Endothelial cell of umbilical vein (primary cell): ENCODE measurements at regions of chr14 and their contacts with region 1.

Region 1: DNA sequence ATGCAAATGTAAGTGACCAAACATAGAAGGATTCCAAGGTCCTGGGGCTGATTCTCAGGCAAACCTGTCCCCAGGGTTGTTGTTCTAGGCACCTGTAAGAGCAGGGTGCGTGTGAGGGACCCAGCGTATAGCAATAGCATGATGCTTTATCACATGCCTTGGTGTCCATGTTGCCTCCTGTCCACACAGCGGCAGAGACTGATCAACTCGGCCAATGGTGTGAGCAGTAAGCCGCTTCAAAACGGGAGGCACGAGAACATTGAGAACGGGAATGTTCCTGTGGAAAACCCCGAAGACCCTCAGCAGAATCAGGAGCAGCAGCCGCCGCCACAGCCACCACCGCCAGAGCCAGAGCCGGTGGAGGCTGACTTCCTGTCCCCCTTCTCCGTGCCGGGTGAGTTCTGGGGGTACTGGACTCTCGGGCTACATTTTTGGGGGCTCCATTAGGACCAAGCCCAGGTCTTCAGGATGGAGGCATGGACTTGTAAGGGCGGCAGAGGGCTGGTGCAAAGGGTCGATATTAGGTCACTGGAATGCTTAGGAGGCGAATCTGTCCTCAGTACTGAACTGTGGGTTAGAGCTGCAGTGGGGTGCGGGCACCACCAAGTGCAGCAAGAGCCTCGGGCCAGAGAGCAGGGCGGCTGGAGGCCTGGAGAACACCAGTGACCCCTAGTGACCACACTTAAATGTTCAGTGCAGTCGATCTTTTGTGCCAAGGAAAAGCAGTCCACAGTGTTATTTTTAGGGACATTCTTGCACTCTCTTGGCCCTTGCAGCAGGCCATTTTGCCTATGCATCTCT is 57.2 kb upstream of the RIN3 start:
- DNase-seq: peak; percentile 66
- H3K4me3 ChIP-seq: no peak overlapping the region
- H3K27ac ChIP-seq: no peak overlapping the region
- H3K4me1 ChIP-seq: peaks cover 24% of the 10 kb centered on the region
- H3K27me3 ChIP-seq: no peaks in the 10 kb centered on the region
- CTCF ChIP-seq: peak; percentile 56 to 74
- POLR2A ChIP-seq: no peak

Region 2: DNA sequence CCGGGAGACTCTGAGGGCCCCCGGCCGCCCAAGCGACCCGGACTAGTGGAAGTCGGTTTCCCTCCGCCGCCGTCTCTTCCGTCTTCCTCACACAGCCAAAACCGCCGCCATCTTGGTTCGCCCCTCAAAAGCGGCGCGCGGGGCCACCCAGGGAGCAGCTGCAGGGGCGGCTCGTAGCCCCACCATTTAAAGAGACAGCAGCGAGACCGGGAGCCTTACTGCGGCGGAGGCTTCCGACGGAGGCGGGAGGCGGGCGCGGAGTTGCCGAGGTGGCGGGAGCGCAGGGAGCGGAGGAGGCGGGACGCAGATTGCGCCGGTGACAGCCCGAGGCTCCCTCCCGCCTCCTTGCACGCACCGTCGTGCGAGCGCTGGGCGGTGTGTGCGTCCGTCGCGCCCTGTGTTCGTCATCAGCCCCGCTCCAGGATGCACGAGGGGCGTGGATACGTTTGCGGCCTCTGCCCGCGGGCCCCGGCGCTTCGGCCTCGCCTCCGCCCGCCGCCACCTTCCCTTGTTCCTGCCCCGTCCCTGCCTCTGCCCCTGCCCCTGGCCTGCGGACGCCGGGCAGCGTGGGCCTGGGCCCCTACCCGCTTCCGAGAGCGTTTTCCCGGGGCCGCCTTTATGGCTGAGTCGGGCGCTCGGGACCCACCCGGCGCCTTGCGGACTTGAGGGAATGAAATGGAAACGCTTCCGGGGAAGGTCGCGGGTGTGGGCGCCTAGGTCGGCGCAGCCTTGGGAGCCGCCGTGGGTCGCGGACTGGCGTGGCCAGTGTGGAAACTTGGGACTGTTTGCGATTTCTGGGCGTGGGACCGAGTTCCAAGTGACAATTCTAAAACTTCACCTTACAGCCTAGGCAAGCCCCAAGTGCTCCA is 946.0 kb before region 1 on chr14 and contains the start of gene PPP4R3A:
- CTCF ChIA-PET with region 1: no interaction called
- POLR2A ChIA-PET with region 1: no interaction called
- dilution Hi-C with region 1: no loop called
- intact Hi-C with region 1: loop called (anchors 1 kb)
- DNase-seq: peak; percentile 96
- H3K4me3 ChIP-seq: peak within 1 kb of the TSS; percentile 56 to 97 (median 85)
- H3K27ac ChIP-seq: peak within 1 kb of the TSS; percentile 83
- H3K4me1 ChIP-seq: peaks cover 17% of the 10 kb centered on the region
- H3K27me3 ChIP-seq: no peaks in the 10 kb centered on the region
- CTCF ChIP-seq: no peak
- POLR2A ChIP-seq: peak; percentile 89
- total RNA-seq, gene PPP4R3A: 77.0 and 83.5 TPM in 2 replicates

Region 3: DNA sequence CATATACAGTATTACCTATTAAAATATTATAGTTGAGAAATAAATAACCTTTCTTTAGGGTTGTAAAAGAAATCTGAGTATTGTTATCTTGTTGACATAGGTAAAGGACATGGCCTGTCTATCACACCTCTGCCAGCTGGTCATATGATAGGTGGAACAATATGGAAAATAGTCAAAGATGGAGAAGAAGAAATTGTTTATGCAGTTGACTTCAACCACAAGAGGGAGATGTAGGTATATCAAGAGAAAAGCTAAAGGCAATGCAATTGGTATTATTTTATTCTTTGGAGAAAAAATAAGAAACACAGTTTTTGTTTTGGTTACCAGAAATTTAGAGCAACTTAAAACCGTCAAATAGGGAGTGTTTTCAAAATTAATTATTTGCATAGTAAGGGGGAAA is 321.1 kb before region 1 on chr14:
- CTCF ChIA-PET with region 1: interaction called, 8 read pairs
- POLR2A ChIA-PET with region 1: no interaction called
- dilution Hi-C with region 1: no loop called
- intact Hi-C with region 1: loop called (anchors 1 kb)
- DNase-seq: peak; percentile 49
- H3K4me3 ChIP-seq: no peak overlapping the region
- H3K27ac ChIP-seq: no peak overlapping the region
- H3K4me1 ChIP-seq: no peaks in the 10 kb centered on the region
- H3K27me3 ChIP-seq: no peaks in the 10 kb centered on the region
- CTCF ChIP-seq: peak; percentile 14 to 35
- POLR2A ChIP-seq: no peak

Region 4: DNA sequence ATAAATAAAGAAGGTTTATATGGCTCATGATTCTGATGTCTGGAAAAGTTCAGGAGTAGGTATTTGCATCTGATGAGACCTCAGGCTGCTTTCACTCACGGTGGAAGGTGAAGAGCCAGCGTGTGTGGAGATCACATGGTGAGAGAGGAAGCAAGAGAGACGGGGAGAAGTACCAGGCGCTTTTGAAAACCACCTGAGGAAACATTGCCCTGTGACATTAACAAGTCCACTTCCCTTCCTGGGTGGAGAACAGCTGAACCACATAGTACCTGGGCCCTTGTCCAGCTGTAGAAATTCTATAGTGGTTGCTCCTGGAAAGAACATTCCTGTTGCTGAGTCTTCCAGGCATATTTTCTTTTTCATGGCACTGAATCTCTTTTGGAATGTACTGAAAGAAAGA is 30.2 kb before region 1 on chr14:
- CTCF ChIA-PET with region 1: no interaction called
- POLR2A ChIA-PET with region 1: no interaction called
- dilution Hi-C with region 1: no loop called
- intact Hi-C with region 1: no loop called
- DNase-seq: no peak
- H3K4me3 ChIP-seq: no peak overlapping the region
- H3K27ac ChIP-seq: no peak overlapping the region
- H3K4me1 ChIP-seq: no peaks in the 10 kb centered on the region
- H3K27me3 ChIP-seq: no peaks in the 10 kb centered on the region
- CTCF ChIP-seq: no peak
- POLR2A ChIP-seq: no peak

Region 5: DNA sequence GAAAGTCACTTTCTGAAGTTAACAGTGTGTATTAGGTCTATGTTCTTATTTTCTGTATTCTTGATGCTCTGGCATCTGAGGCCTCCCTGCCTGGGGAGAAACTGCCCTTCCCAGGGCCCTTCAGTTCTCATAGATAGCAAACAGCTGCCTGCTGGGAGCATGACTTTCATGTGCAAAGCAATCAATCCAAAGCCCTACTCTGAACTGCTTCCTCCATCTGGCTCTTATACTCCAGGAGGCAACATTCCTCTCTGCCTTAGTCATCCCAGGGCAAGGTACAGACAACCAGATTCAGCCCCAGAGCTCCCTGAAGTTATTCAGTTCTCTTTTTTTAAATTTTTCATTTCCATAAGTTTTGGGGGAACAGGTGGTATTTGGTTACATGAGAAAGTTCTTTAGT is 15.5 kb after region 1 on chr14:
- CTCF ChIA-PET with region 1: interaction called, 10 read pairs
- POLR2A ChIA-PET with region 1: no interaction called
- dilution Hi-C with region 1: no loop called
- intact Hi-C with region 1: no loop called
- DNase-seq: peak; percentile 52
- H3K4me3 ChIP-seq: no peak overlapping the region
- H3K27ac ChIP-seq: no peak overlapping the region
- H3K4me1 ChIP-seq: no peaks in the 10 kb centered on the region
- H3K27me3 ChIP-seq: peaks cover 0 to 3% of the 10 kb centered on the region in 2 experiments
- CTCF ChIP-seq: no peak
- POLR2A ChIP-seq: no peak

Region 6: DNA sequence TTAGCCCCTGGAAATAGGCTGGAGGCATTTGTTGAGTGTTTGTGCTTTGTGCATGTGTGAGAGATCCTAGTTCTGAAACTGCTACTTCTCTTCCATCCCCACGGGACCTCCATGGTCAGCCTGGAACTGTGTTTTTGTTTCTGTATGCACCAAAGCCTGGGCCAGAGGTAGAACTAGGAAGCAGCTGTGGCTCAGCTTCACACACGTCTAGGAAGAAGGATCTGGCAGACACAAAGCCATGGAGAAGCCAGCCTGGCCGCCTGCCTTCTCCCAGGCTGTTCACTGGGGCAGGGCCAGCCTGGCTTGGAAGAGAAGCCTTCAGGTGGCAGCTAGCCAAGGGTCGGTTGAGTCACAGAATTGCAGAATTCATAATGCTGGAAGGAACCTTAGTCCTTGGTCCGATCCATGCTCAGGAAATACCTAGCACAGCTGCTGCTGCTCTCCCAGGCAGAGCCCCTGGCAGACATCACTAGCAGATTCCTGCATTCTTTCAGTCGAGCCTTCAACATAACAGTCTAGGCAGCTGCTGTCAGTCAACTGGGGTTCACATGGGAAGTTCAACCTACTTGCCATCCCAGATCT is 84.1 kb after region 1 on chr14:
- CTCF ChIA-PET with region 1: interaction called, 6 read pairs
- POLR2A ChIA-PET with region 1: interaction called, 5 read pairs
- dilution Hi-C with region 1: no loop called
- intact Hi-C with region 1: loop called (anchors 1 kb)
- DNase-seq: peak; percentile 99
- H3K4me3 ChIP-seq: no peak overlapping the region
- H3K27ac ChIP-seq: peak overlapping the region; percentile 98
- H3K4me1 ChIP-seq: peaks cover 24% of the 10 kb centered on the region
- H3K27me3 ChIP-seq: no peaks in the 10 kb centered on the region
- CTCF ChIP-seq: no peak
- POLR2A ChIP-seq: peak; percentile 72

Region 7: DNA sequence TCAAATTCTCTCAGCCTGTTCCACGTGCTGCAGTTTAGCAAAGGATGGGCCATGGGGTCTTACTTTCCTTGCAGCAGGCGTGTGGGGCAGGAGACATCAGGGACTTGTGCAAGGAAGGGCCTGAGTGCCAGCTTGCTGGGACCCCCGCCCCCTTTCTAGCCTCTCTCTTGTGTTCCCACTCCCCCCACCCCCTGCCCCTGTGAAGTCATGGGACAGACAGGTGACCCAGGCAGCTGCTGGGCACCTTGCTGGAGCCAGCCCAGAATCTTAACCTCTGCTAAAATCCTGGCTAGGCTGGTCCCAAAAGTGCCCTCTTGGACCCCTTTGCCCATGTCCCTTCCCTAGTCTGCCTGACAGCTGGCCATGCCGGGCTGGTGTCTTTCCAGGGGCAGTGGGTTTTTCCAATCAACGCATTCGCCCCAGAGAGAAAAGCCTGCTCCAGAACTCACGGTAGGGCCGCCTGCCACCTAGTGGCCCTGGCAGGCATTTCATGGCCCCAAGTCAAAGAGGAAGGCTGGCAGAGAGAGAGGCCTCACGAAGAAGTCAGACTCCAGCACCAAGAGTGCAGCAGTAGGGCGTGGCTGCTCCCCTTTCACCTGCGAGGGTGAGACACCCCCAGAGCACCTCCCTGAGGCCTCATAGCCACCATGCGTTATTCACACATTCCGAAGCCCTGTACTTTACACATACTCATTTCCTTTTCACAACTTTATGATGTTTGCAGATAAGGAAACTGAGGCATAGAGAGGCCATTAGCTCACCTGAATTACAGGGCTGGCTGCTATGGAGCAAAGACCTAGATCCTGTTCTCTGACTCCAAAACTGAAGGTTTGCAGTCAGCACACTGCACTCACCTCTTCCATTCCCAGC is 224.6 kb after region 1 on chr14:
- CTCF ChIA-PET with region 1: interaction called, 17 read pairs
- POLR2A ChIA-PET with region 1: no interaction called
- dilution Hi-C with region 1: no loop called
- intact Hi-C with region 1: loop called (anchors 1 kb)
- DNase-seq: peak; percentile 71
- H3K4me3 ChIP-seq: no peak overlapping the region
- H3K27ac ChIP-seq: no peak overlapping the region
- H3K4me1 ChIP-seq: peaks cover 4% of the 10 kb centered on the region
- H3K27me3 ChIP-seq: no peaks in the 10 kb centered on the region
- CTCF ChIP-seq: peak; percentile 89 to 94
- POLR2A ChIP-seq: no peak